RWPE1 (cell line): ENCODE measurements at regions of chr6 and their contacts with region 1.

Region 1: GRCh38 chr6:13853871-13854270 is 39.5 kb upstream of the MCUR1 start:
- DNase-seq: no peak
- H3K27ac ChIP-seq: no peak overlapping the region
- CTCF ChIP-seq: no peak

Region 2: GRCh38 chr6:13873285-13874190 is 19.7 kb after region 1 on chr6:
- CTCF ChIA-PET with region 1: interaction called, 10 read pairs
- POLR2A ChIA-PET with region 1: no interaction called
- DNase-seq: peak; percentile 70
- H3K27ac ChIP-seq: no peak overlapping the region
- CTCF ChIP-seq: peak; percentile 87

Region 3: DNA sequence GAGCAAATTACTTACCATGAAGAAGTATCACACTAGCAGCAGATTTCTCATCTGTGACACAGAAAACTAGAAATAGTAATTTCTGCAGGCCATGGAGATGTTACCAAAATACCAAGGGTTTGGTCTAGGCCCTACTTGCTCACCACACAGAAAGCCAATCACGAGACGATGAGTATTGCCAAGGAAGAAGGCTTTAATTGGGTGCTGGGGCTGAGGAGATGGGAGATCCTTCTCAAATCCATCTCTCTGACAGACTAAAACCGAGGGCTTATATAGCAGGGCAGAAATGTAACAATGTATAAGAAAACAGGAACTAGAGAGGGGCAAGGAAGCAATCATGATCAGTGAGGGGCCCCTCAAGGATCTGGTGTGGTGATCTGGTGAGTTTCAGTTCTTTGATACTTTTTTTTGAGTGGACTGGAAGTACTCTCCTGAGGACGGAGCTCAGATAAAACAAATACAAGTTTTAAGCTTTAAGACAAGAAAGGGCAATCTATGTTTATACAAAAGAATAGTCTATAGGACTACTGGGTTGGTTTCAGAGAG is 111.8 kb after region 1 on chr6:
- CTCF ChIA-PET with region 1: no interaction called
- POLR2A ChIA-PET with region 1: no interaction called
- DNase-seq: no peak
- H3K27ac ChIP-seq: no peak overlapping the region
- CTCF ChIP-seq: no peak